Ascending aorta (tissue), 2 donors: ENCODE measurements at regions of chr19 and their contacts with region 1.

Region 1: GRCh38 chr19:56403764-56404704 is at the start of gene ZNF583:
- DNase-seq: peak; percentile 92 to 98
- H3K4me3 ChIP-seq: peak within 1 kb of the TSS; percentile 88 to 91
- H3K27ac ChIP-seq: peak within 1 kb of the TSS; percentile 93 to 97
- H3K4me1 ChIP-seq: peaks cover 0 to 10% of the 10 kb centered on the region in 2 donors
- H3K27me3 ChIP-seq: no peaks in the 10 kb centered on the region
- CTCF ChIP-seq: no peak
- total RNA-seq, gene ZNF583: 0.21 TPM

Region 2: DNA sequence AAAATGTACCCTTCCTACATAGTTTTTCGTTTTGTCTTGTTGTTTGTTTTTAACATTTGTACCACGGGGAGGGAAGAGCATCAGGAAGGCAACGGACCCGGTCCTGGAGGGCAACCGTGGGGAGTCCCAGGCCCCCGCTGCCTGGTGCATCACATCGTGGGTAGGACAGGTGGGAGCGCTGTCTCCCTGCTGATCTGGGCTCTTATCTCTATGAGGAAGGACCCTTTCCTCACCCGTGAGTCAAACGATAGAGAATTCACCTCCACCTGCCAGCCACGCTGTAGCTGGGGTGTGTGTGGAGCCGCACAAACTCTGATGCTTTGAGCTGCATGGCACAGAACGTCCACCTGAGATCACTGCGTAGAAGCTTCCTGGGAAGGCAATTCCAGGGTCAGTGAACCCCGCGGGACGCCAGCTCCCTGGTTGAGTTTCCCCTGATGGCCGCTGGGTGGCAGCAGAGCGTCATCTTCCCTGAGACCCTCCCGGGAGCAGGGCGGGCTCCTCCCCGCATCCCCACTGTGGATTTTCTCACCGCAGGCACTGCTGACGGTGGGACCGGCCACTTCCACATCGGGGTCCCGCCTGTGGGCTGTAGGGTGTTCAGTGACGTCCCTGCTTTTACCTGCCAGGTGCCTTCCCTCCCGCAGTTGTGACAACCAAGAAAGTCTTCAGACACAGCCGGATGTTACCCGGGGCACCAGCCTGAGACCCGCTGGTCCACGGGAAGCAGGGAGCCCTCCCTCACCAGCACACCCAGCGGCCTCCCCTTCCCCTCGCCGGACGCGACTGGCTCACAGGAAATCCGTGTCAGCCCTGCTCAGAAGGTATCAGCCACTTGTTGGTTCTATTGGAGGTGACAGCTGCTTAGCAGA is 337.6 kb before region 1 on chr19:
- intact Hi-C with region 1: no loop called
- DNase-seq: peak in 1 of 2 donors; percentile 70
- H3K4me3 ChIP-seq: peak overlapping the region in 1 of 2 donors; percentile 38
- H3K27ac ChIP-seq: no peak overlapping the region
- H3K4me1 ChIP-seq: peaks cover 0 to 6% of the 10 kb centered on the region in 2 donors
- H3K27me3 ChIP-seq: no peaks in the 10 kb centered on the region
- CTCF ChIP-seq: peak; percentile 61 to 90 (median 85)

Region 3: GRCh38 chr19:56121180-56122167 is 282.6 kb before region 1 on chr19 and contains the start of gene ZNF787:
- intact Hi-C with region 1: loop called (anchors 2 kb)
- DNase-seq: peak; percentile 95 to 100
- H3K4me3 ChIP-seq: peak within 1 kb of the TSS; percentile 93 to 99
- H3K27ac ChIP-seq: peak within 1 kb of the TSS; percentile 89 to 99
- H3K4me1 ChIP-seq: peaks cover 13 to 23% of the 10 kb centered on the region in 2 donors
- H3K27me3 ChIP-seq: no peaks in the 10 kb centered on the region
- CTCF ChIP-seq: no peak
- total RNA-seq, gene ZNF787: 18.1 TPM

Region 4: DNA sequence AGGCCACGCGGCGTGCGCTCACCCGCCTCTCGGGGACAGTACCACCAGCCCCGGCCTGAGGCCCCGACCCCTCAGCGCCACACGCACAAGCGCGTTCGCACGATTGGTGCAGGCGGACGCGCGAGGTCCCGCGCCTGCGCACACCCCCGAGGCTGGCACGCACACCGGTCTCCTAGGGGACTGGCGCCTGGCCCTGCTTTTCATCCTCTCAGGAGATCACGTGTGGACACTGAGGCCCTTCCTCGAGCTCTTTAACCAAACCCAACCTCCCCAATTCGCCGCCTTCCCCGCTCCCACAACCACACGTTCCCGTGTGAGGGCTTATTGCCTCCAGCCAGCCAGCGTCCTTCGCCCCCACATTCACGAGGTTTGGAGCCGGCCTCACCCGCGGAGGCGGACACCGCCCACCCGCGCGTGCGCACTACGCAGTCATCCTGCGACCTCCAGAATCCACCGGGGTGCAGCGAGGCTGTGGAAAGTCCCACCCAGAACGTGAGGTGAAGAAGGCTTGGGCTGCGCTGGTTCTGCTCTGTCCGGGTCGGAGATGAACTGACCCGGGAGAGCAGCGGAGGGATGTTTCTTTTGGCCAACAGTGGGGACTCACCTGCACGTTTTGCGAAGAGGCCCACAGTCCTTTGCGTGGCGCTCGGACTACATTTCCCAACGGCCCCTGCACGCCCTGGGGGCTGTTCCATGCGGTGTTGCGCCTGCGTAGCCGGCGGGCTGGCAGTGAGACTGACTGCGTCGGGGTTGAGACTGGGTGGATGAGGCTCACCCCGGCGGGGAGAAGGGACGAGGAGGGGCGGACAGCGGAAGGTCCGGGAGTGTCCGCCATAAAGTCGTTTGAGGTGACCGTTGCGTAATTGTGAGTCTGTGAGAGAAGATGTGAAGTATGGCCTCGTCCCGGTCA is 73.7 kb after region 1 on chr19:
- intact Hi-C with region 1: loop called (anchors 1 kb)
- DNase-seq: peak; percentile 57 to 91
- H3K4me3 ChIP-seq: peak overlapping the region; percentile 61 to 80
- H3K27ac ChIP-seq: peak overlapping the region; percentile 52 to 84
- H3K4me1 ChIP-seq: peaks cover 0 to 7% of the 10 kb centered on the region in 2 donors
- H3K27me3 ChIP-seq: no peaks in the 10 kb centered on the region
- CTCF ChIP-seq: no peak

Region 5: DNA sequence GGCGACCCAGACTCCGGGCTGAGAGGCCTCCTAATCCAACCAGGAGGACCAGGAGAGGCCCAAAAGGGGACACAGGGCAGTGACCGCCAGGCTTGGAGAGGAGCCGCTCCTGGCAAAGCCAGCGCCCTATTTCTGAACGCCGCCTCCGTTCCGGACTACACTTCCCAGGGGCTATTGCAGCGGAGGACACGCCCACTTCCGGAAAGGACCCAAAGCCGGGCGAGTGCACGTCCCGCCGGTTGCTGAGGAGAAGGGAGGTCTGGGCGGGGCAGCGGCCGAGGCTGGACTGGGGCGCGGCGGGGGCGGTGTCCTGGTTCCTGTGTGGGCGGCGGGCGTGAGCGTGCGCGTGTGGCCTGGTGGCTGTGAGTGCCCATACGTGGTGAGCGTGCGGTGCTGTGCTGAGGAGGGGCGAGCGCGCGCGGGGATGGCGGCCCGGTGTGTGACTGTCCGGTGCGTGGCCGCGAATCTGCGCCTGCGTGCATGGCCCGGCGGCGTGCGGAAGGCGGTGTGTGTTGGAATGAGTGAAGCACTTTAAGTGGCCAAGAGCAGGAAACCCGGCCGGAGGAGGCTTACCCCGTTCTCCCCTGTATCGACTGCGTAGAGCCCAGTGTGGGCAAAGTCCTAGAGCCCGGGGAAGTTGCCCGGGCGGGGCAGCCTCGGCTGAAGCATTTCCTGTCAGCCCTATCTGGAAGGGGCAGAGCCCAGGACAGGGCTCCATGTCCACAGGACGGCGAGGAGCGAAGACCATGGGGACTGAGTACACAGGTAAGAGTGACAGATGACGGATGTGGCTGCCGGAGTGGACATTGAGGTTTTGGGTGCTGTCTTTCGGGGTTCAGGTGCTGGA is 163.5 kb after region 1 on chr19 and contains the start of gene ZNF470:
- intact Hi-C with region 1: loop called (anchors 10 kb)
- DNase-seq: peak; percentile 82 to 97
- H3K4me3 ChIP-seq: peak within 1 kb of the TSS; percentile 82 to 90
- H3K27ac ChIP-seq: peak within 1 kb of the TSS; percentile 76 to 80
- H3K4me1 ChIP-seq: peaks cover 0 to 4% of the 10 kb centered on the region in 2 donors
- H3K27me3 ChIP-seq: no peaks in the 10 kb centered on the region
- CTCF ChIP-seq: no peak
- total RNA-seq, gene ZNF470: 0.21 TPM

Region 6: GRCh38 chr19:56725829-56726424 is 321.9 kb after region 1 on chr19:
- intact Hi-C with region 1: no loop called
- DNase-seq: no peak
- H3K4me3 ChIP-seq: no peak overlapping the region
- H3K27ac ChIP-seq: no peak overlapping the region
- H3K4me1 ChIP-seq: no peaks in the 10 kb centered on the region
- H3K27me3 ChIP-seq: no peaks in the 10 kb centered on the region
- CTCF ChIP-seq: no peak

Region 7: GRCh38 chr19:56838909-56839651 is 435.0 kb after region 1 on chr19:
- intact Hi-C with region 1: loop called (anchors 5 kb)
- DNase-seq: peak; percentile 94 to 98
- H3K4me3 ChIP-seq: peak overlapping the region; percentile 57 to 70
- H3K27ac ChIP-seq: peak overlapping the region; percentile 86 to 95
- H3K4me1 ChIP-seq: no peaks in the 10 kb centered on the region
- H3K27me3 ChIP-seq: no peaks in the 10 kb centered on the region
- CTCF ChIP-seq: no peak